Activated T-helper 1 cell treated with anti-CD3 and anti-CD28 coated beads, Interleukin-12 subunit alpha, Interleukin-12 subunit beta, Interleukin-2, Interleukin-4 antibody, amounts not matched to agents 30 ng/mL and 10 ng/mL and 1 ng/mL, durations not matched to agents 14 hours and 24 hours and 36 hours (primary cell): ENCODE measurements at regions of chr4 and their contacts with region 1.

Region 1: GRCh38 chr4:88514557-88515511 is 8.7 kb downstream of the PYURF start:
- DNase-seq: no peak
- H3K4me3 Mint-ChIP-seq: no peak overlapping the region
- H3K27ac Mint-ChIP-seq: no peak overlapping the region
- H3K4me1 Mint-ChIP-seq: no peaks in the 10 kb centered on the region
- H3K27me3 Mint-ChIP-seq: no peaks in the 10 kb centered on the region

Region 2: DNA sequence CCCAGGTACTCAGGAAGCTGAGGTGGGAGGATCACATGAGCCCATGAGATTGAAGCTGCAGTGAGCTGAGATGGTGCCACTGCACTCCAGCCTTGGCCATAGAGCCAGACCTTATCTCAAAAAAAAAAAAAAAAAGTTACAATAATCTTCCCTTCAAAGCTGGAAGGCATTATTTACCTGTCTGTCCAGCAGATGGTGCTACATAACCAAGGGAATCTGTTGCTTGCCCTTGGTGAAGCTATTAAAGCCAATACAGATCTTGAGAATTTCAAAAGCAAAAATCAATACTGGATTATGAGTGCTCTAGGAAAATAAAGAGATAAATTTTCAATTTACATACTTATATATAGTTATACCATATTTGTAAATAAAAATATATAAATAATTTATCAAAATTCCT is 481.5 kb before region 1 on chr4:
- intact Hi-C with region 1: loop called (anchors 1 kb)
- DNase-seq: peak; percentile 29
- H3K4me3 Mint-ChIP-seq: no peak overlapping the region
- H3K27ac Mint-ChIP-seq: no peak overlapping the region
- H3K4me1 Mint-ChIP-seq: peaks cover 2% of the 10 kb centered on the region
- H3K27me3 Mint-ChIP-seq: no peaks in the 10 kb centered on the region

Region 3: DNA sequence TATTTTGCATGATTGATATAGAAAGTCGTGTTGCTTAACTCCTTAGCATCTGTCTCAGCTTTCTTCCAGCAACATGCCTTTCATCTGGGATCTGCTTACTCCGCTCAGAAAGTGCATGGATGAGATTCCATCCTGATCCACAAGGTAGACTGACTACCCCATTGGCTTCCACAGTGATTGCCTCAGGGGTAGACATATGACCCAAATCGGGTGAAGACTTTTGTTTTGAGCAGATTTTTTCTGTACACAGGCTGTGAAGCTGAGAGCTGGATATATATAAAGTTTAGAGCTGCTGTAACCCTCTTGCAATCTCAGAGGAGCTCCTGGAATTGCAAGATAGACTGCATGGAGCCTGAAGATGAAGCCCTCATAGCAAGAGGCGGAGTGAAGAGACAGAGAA is 144.9 kb before region 1 on chr4:
- intact Hi-C with region 1: loop called (anchors 1 kb)
- DNase-seq: no peak
- H3K4me3 Mint-ChIP-seq: no peak overlapping the region
- H3K27ac Mint-ChIP-seq: no peak overlapping the region
- H3K4me1 Mint-ChIP-seq: peaks cover 11% of the 10 kb centered on the region
- H3K27me3 Mint-ChIP-seq: no peaks in the 10 kb centered on the region

Region 4: GRCh38 chr4:88573995-88574394 is 59.2 kb after region 1 on chr4:
- intact Hi-C with region 1: no loop called
- DNase-seq: no peak
- H3K4me3 Mint-ChIP-seq: no peak overlapping the region
- H3K27ac Mint-ChIP-seq: no peak overlapping the region
- H3K4me1 Mint-ChIP-seq: no peaks in the 10 kb centered on the region
- H3K27me3 Mint-ChIP-seq: peaks cover 13% of the 10 kb centered on the region

Region 5: DNA sequence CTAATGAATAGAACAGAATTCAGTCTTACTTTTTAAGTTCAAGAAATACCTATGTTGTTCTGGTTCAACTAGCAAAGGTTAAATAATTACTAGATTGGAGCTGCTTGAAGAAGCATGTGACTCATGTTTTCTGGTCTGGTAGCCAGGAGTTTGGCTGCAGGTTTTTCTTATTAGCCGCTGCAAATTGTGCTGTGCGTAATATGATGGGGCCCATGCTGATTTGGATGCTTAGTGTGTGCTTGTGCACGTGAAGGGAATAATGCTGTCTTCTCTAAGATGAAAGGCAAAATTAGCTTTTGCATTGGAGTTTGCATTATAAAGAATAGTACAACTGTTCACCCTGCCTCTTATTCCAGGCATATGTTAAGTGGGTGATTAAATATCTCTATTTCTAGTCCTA is 1102.5 kb after region 1 on chr4:
- intact Hi-C with region 1: no loop called
- DNase-seq: no peak
- H3K4me3 Mint-ChIP-seq: no peak overlapping the region
- H3K27ac Mint-ChIP-seq: no peak overlapping the region
- H3K4me1 Mint-ChIP-seq: peaks cover 30% of the 10 kb centered on the region
- H3K27me3 Mint-ChIP-seq: no peaks in the 10 kb centered on the region